ENCODE measurements at regions of chr6 and their contacts with region 1.

Region 1: GRCh38 chr6:149717588-149718458 is at the start of gene LATS1:
- DNase-seq: peak; percentile 85 to 94 (median 89)
- ATAC-seq: peak; percentile 87
- H3K4me3 ChIP-seq: peak within 1 kb of the TSS; percentile 84
- H3K4me3 Mint-ChIP-seq: peak within 1 kb of the TSS; percentile 100
- H3K27ac ChIP-seq: peak within 1 kb of the TSS; percentile 92 to 95
- H3K27ac Mint-ChIP-seq: peak within 1 kb of the TSS; percentile 99
- H3K4me1 ChIP-seq: peaks cover 21% of the 10 kb centered on the region
- H3K4me1 Mint-ChIP-seq: peaks cover 47% of the 10 kb centered on the region
- H3K27me3 ChIP-seq: no peaks in the 10 kb centered on the region
- H3K27me3 Mint-ChIP-seq: no peaks in the 10 kb centered on the region
- CTCF ChIP-seq: no peak
- total RNA-seq, gene LATS1: 36.1 to 39.6 TPM

Region 2: DNA sequence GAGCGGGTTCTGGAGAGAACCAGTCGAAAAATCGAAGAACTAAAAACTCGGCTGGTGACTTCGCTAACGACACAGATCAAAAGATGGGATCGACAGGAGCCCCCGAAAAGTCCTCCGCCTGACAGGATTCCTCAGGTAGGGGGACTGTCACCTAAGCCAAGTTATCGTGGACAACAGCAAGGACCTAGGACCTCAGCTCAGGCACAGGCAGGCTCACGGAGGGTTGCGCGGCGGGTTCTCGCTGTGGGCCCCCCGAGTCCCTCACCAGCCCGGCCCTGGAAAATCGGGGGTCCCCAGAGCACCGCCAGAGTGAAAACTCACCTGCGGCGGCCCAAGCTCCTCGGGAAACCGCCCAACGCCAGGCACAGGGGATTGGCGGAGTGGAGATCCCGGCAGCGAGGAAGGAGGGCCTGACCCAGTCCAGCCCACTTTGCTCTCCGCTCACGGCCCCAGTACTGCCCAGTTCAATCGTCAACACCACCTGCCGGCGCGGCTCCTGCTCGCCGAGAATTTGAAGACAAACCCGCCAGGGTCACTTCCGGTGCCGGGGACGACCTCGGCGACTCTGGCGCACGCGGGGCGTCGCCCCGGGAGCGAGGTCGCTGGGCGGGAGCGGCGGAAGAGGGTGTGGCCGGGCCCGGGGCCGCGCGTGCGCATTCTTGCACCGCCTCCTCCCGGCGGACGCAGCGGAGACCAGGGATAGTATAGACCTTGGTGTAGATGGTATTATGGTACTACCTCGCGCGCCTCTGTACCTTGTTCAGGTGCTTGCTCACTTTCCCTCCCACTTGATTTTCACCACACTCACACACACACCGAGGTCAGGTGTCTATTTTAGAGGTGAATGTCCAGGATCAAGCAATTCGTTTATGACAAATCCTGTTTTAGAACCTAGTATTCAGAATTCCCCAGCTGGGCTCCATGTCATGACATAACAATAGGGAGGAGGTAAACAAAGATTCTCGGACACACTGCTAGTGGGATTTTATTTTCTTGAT is 69.4 kb before region 1 on chr6 and contains the start of gene KATNA1:
- CTCF ChIA-PET with region 1: no interaction called
- POLR2A ChIA-PET with region 1: interaction called, 6 read pairs
- intact Hi-C with region 1: loop called in 1 of 2 experiments (anchors 5 kb)
- DNase-seq: peak; percentile 69 to 93 (median 82)
- ATAC-seq: peak; percentile 88
- H3K4me3 ChIP-seq: peak within 1 kb of the TSS; percentile 100
- H3K4me3 Mint-ChIP-seq: peak within 1 kb of the TSS; percentile 90
- H3K27ac ChIP-seq: peak within 1 kb of the TSS; percentile 66 to 85
- H3K27ac Mint-ChIP-seq: peak within 1 kb of the TSS; percentile 84
- H3K4me1 ChIP-seq: peaks cover 13% of the 10 kb centered on the region
- H3K4me1 Mint-ChIP-seq: peaks cover 41% of the 10 kb centered on the region
- H3K27me3 ChIP-seq: no peaks in the 10 kb centered on the region
- H3K27me3 Mint-ChIP-seq: no peaks in the 10 kb centered on the region
- CTCF ChIP-seq: no peak
- total RNA-seq, gene KATNA1: 17.0 to 18.1 TPM

Measured in CD4-positive, alpha-beta T cell (primary cell).